ENCODE measurements at regions of chr6 and their contacts with region 1.

Region 1: GRCh38 chr6:110039364-110039980 is 61.4 kb downstream of the GPR6 start:
- DNase-seq: peak; percentile 91
- ATAC-seq: peak; percentile 92
- H3K4me3 Mint-ChIP-seq: peak overlapping the region; percentile 81
- H3K27ac Mint-ChIP-seq: peak overlapping the region; percentile 95
- H3K4me1 Mint-ChIP-seq: peaks cover 28% of the 10 kb centered on the region
- H3K27me3 Mint-ChIP-seq: no peaks in the 10 kb centered on the region

Region 2: DNA sequence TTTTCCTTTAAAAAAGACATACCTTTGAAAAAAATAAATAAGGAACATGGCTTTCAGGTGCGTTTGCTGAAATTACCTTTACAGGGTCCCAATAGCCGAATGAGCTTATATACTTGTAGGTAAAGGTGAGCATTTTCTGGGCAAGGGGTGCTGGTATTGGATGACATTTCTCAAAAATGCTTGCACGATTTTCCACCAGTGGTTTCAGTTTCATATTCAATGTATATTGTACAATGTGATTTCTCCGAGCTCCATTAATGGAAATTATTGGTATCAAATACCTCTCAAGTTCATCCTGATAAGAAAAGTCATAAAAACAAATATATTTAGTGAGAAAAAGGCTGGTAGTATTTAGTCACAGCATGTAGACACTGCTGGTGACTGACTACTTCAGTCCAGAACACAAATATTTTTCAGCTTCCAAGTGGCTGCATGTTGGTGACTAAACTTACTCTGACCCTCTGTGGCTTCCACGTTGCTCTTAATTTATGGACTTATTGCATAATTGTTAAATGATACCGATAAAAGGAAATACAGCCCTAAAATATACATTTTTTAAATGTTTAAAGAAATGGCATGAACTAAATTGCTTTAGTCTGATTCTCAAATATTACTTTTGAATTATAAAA is 523.6 kb before region 1 on chr6:
- CTCF ChIA-PET with region 1: interaction called, 11 read pairs
- POLR2A ChIA-PET with region 1: no interaction called
- DNase-seq: peak; percentile 39
- ATAC-seq: peak; percentile 70
- H3K4me3 Mint-ChIP-seq: peak overlapping the region; percentile 45
- H3K27ac Mint-ChIP-seq: peak overlapping the region; percentile 78
- H3K4me1 Mint-ChIP-seq: peaks cover 36% of the 10 kb centered on the region
- H3K27me3 Mint-ChIP-seq: no peaks in the 10 kb centered on the region

Region 3: DNA sequence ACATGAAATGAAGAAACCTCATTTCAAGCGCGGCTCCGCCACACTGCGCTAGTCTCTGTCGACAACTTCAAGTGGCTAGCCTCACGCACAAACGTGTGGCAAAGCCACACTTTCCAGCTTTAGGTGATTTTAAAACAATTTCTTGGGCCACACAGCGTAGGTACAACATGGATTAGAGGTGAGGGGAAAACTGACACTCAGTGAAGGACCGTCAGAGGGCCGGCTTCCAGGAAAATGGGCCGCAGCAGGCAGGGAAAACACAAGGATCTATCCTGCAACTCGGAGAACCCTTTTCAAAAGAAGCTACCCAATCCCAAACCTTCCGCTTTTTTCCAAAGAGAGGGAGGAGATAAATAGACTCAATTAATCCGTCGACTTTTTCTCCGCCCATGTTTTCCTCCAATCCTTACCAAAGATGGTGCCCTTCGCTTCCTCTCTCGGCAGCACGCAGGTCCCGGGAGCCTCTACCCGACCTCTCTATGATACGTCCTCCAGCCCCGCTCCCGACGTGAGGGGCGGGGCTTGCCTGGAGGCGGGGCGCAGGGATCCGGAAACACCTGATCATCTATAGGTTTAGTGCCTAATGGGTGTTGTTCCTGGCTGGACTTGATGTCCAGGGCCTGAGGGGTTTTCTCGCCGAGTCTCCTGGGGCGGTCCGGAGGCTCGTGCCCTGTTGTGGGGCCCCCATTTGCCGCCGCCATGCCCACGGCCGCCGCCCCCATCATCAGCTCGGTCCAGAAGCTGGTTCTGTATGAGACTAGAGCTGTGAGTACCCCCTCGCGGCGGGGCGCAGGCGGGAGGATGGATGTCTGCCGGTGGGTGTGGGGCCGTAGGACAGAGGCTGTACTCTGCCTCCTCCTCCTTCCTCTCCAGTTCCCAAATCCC is 348.5 kb before region 1 on chr6 and contains the starts of genes AK9 and FIG4:
- CTCF ChIA-PET with region 1: interaction called, 34 read pairs
- POLR2A ChIA-PET with region 1: interaction called, 5 read pairs
- DNase-seq: peak; percentile 92
- ATAC-seq: peak; percentile 97
- H3K4me3 Mint-ChIP-seq: peak within 1 kb of the TSS; percentile 90
- H3K27ac Mint-ChIP-seq: peak within 1 kb of the TSS; percentile 88
- H3K4me1 Mint-ChIP-seq: peaks cover 16% of the 10 kb centered on the region
- H3K27me3 Mint-ChIP-seq: no peaks in the 10 kb centered on the region
- total RNA-seq, gene AK9: 2.9 to 3.1 TPM
- total RNA-seq, gene FIG4: 9.5 to 10.8 TPM

Region 4: DNA sequence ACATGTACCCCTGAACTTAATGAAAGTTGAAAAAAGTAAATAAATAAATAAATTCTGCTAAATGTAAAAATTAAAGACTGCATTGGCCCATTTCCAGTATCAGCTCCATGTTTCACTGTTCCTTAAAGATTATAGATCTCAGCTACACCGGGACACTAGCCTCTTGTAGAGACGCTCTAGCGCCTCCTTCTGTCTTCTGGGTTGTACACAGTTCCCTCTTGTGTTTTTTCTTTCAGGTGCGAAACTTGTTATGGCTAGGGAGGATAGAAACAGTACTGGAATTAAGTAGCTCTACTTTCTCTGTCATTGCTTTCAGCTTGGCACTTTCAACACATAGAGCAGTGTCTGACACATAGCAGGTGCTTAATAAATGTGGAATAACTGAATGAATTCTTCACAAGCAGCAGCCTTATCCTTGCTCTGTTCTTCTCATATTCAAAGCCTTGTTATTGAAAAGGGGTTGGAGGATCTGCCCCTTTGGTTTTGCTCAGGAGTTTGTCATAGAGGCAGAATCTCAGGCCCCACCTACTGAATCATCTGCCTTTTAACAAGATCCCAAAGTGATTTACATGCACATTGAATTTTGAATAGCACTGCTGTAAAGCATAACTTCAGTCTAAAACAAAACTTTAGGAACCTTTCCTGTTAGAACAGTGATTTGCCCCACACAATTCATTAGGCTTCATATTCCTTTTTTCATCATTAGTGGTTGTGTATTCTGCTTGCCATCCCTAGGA is 256.1 kb before region 1 on chr6:
- CTCF ChIA-PET with region 1: interaction called, 11 read pairs
- POLR2A ChIA-PET with region 1: no interaction called
- DNase-seq: no peak
- ATAC-seq: no peak
- H3K4me3 Mint-ChIP-seq: no peak overlapping the region
- H3K27ac Mint-ChIP-seq: no peak overlapping the region
- H3K4me1 Mint-ChIP-seq: peaks cover 10% of the 10 kb centered on the region
- H3K27me3 Mint-ChIP-seq: no peaks in the 10 kb centered on the region

Region 5: GRCh38 chr6:110029144-110029543 is 10.3 kb before region 1 on chr6:
- CTCF ChIA-PET with region 1: interaction called, 39 read pairs
- POLR2A ChIA-PET with region 1: no interaction called
- DNase-seq: no peak
- ATAC-seq: no peak
- H3K4me3 Mint-ChIP-seq: no peak overlapping the region
- H3K27ac Mint-ChIP-seq: no peak overlapping the region
- H3K4me1 Mint-ChIP-seq: no peaks in the 10 kb centered on the region
- H3K27me3 Mint-ChIP-seq: no peaks in the 10 kb centered on the region

Region 6: DNA sequence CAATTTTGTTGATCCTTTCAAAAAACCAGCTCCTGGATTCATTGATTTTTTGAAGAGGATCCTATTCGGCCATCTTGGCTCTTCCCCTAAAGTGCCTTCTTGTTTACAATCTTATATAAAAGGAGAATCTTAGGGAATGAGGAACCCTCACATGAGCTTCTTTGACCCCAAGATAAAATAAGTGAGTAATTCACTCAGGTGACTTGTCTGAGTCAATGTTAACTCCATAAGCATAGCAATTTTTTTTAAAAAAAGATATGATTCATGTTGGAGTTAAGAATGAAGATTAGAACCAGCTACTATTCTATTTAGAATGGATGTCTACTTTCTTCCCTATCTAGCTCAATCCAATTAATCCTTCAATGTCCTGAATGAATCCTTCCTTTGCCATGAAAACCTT is 119.0 kb after region 1 on chr6:
- CTCF ChIA-PET with region 1: no interaction called
- POLR2A ChIA-PET with region 1: no interaction called
- DNase-seq: no peak
- ATAC-seq: no peak
- H3K4me3 Mint-ChIP-seq: no peak overlapping the region
- H3K27ac Mint-ChIP-seq: no peak overlapping the region
- H3K4me1 Mint-ChIP-seq: no peaks in the 10 kb centered on the region
- H3K27me3 Mint-ChIP-seq: peaks cover 9% of the 10 kb centered on the region

Region 7: GRCh38 chr6:110179401-110180227 is 140.1 kb after region 1 on chr6 and contains the start of gene WASF1:
- CTCF ChIA-PET with region 1: interaction called, 18 read pairs
- POLR2A ChIA-PET with region 1: interaction called, 3 read pairs
- DNase-seq: peak; percentile 93
- ATAC-seq: peak; percentile 91
- H3K4me3 Mint-ChIP-seq: no peak within 1 kb of the TSS
- H3K27ac Mint-ChIP-seq: peak within 1 kb of the TSS; percentile 5
- H3K4me1 Mint-ChIP-seq: peaks cover 8% of the 10 kb centered on the region
- H3K27me3 Mint-ChIP-seq: peaks cover 12% of the 10 kb centered on the region
- total RNA-seq, gene WASF1: 0.50 to 0.76 TPM

Region 8: DNA sequence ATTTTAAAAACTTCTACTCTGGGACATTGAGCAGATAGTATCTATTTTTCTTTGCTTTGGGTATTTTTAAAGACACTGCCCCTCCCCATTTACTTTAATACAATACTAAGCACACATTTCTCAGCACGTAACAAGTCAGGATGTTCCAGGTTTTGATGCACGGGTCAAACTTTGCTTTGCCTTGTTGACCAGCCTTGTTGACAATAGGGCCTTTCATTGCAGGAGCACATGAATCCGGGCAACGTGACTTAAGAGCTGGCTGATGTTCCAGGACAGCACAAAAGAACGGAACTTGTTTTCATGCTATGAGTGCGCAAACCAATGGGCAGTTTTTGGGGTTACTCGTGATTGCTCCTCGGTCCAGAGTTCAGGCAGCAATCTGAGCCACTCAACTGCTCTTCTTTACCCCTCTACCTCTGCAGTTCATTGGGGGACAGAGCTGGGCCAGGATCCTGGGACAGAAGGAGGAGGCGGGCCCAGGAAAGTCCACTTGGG is 515.5 kb after region 1 on chr6:
- CTCF ChIA-PET with region 1: no interaction called
- POLR2A ChIA-PET with region 1: no interaction called
- DNase-seq: no peak
- ATAC-seq: no peak
- H3K4me3 Mint-ChIP-seq: no peak overlapping the region
- H3K27ac Mint-ChIP-seq: no peak overlapping the region
- H3K4me1 Mint-ChIP-seq: peaks cover 11% of the 10 kb centered on the region
- H3K27me3 Mint-ChIP-seq: no peaks in the 10 kb centered on the region

Region 9: DNA sequence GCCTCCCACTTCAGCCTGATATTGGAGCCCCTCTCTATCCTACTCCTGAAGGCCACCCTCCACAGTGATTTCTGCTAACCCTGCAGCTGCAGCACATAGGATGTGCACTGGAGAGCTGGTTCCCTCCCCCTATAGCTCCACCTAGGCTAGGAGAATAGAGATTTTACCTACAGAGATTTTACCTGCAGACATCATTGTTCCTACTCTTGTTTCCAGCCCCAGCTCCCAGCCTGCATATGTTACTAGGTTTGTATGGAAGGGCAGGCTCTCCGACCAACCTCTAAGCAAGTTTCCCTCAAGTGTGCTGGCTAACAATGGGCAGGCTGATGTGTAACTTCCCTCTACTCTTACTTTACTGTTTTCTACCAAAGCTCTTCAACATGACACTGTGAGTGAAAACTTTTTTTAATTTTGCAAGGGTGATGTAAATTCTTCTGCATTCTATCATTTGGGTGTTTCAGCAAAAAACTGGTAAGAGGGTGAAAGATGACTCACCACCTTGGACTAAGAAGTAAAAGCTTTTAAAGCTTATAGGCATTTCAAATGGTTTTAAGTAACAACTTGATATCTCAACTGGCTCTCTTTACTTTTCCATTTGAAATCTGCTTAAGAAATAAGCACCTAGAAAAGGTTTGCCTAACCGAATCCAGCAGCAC is 669.0 kb after region 1 on chr6:
- CTCF ChIA-PET with region 1: no interaction called
- POLR2A ChIA-PET with region 1: no interaction called
- DNase-seq: no peak
- ATAC-seq: no peak
- H3K4me3 Mint-ChIP-seq: no peak overlapping the region
- H3K27ac Mint-ChIP-seq: no peak overlapping the region
- H3K4me1 Mint-ChIP-seq: no peaks in the 10 kb centered on the region
- H3K27me3 Mint-ChIP-seq: no peaks in the 10 kb centered on the region